ENCODE measurements at regions of chr19 and their contacts with region 1.

Region 1: GRCh38 chr19:43595999-43596841 is at the starts of genes IRGQ and ZNF576:
- DNase-seq: peak; percentile 100
- ATAC-seq: peak; percentile 88
- H3K4me3 Mint-ChIP-seq: peak within 1 kb of the TSS; percentile 99
- H3K27ac Mint-ChIP-seq: peak within 1 kb of the TSS; percentile 99
- H3K4me1 Mint-ChIP-seq: peaks cover 17% of the 10 kb centered on the region
- H3K27me3 Mint-ChIP-seq: no peaks in the 10 kb centered on the region
- CTCF ChIP-seq: no peak
- total RNA-seq, gene IRGQ: 33.6 to 38.1 TPM (median 35.5 TPM) in 3 replicates
- total RNA-seq, gene ZNF576: 15.9 to 18.5 TPM (median 16.5 TPM) in 3 replicates

Region 2: DNA sequence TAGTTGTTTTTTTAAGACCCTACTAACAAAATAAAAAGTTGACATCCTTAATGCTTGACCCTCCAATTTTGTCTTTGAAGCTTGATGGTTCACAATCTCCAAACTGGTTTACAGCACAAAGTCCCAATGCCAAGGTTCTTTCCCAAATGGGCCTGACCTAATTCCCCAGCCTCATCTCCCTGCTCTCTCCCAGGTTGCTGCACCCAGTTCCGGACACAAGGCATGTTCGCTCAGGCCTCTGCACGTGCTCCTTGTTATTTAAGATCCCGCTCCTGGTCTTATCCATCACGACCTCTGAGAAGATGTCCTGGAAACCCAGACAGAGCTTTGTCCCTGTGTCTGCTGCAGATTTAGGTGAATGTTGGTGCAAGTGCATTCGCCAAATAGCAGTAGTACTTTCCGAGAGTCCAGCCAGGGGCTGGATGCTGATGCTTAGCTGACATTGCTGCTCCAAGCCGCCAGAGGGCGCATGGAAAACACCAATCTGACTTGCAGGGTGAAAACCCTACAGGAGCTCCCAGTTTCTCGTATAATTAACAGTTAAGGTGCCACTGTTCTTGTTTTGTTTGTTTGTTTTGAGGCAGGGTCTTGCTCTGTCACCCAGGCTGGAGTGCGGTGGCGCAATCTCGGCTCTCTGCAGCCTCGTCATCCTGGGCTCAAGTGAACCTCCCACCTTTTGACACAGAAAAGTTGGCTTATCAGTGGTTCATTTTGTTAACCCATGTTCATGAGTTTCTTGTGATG is 149.3 kb before region 1 on chr19:
- CTCF ChIA-PET with region 1: interaction called, 24 read pairs
- POLR2A ChIA-PET with region 1: no interaction called
- DNase-seq: peak; percentile 84
- ATAC-seq: peak; percentile 92
- H3K4me3 Mint-ChIP-seq: peak overlapping the region; percentile 34; the same call in 1 of the 2 replicates
- H3K27ac Mint-ChIP-seq: 0 out of 2 replicates have a peak overlapping the region, but pooled peaks have one; percentile 5
- H3K4me1 Mint-ChIP-seq: peaks cover 10% of the 10 kb centered on the region
- H3K27me3 Mint-ChIP-seq: peaks cover 7% of the 10 kb centered on the region; the same call in 1 of the 2 replicates
- CTCF ChIP-seq: peak; percentile 91

Region 3: DNA sequence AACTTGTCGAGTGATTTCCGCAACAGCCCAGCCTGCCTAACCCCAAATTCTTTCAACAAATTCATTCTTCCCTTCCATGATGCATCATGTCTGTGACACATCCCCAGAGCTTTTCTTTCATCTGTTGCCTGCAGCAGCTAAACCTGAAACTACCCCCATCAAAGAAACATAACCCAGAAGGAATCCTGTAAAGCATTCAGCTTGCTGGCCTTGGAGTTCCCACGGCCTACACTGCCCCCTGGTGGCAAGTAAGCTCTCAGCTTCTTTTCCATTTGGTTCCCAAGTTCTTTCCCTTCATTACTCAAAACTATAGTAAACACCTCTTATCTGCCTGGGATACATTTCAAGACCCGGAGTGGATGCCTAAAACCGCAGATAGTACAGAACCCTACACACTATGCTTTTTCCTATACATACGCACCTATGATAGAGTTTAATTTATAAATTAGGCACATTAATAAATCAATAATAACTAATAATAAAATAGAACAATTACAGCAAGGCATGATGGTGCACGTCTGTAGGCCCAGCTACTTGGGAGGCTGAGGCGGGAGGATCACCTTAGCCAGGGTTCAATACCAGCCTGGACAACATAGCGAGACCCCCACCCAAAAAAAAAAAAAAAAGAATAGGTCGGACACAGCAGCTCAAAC is 76.7 kb before region 1 on chr19:
- CTCF ChIA-PET with region 1: interaction called, 20 read pairs
- POLR2A ChIA-PET with region 1: interaction called, 4 read pairs
- DNase-seq: peak; percentile 83
- ATAC-seq: no peak; the same call in 1 of the 2 replicates
- H3K4me3 Mint-ChIP-seq: no peak overlapping the region
- H3K27ac Mint-ChIP-seq: peak overlapping the region; percentile 32; the same call in 1 of the 2 replicates
- H3K4me1 Mint-ChIP-seq: peaks cover 3% of the 10 kb centered on the region
- H3K27me3 Mint-ChIP-seq: no peaks in the 10 kb centered on the region
- CTCF ChIP-seq: peak; percentile 92

Region 4: GRCh38 chr19:43541920-43542650 is 54.1 kb before region 1 on chr19:
- CTCF ChIA-PET with region 1: no interaction called
- POLR2A ChIA-PET with region 1: no interaction called
- DNase-seq: no peak
- ATAC-seq: no peak
- H3K4me3 Mint-ChIP-seq: no peak overlapping the region
- H3K27ac Mint-ChIP-seq: no peak overlapping the region
- H3K4me1 Mint-ChIP-seq: no peaks in the 10 kb centered on the region
- H3K27me3 Mint-ChIP-seq: no peaks in the 10 kb centered on the region
- CTCF ChIP-seq: no peak

Region 5: GRCh38 chr19:43570174-43570791 is 25.9 kb before region 1 on chr19:
- CTCF ChIA-PET with region 1: interaction called, 17 read pairs
- POLR2A ChIA-PET with region 1: interaction called, 5 read pairs
- DNase-seq: no peak
- ATAC-seq: peak; percentile 48
- H3K4me3 Mint-ChIP-seq: no peak overlapping the region
- H3K27ac Mint-ChIP-seq: peak overlapping the region; percentile 74
- H3K4me1 Mint-ChIP-seq: peaks cover 12% of the 10 kb centered on the region
- H3K27me3 Mint-ChIP-seq: no peaks in the 10 kb centered on the region
- CTCF ChIP-seq: no peak

Region 6: GRCh38 chr19:43584484-43584883 is 11.7 kb before region 1 on chr19:
- CTCF ChIA-PET with region 1: interaction called, 53 read pairs
- POLR2A ChIA-PET with region 1: interaction called, 3 read pairs
- DNase-seq: no peak
- ATAC-seq: no peak
- H3K4me3 Mint-ChIP-seq: no peak overlapping the region
- H3K27ac Mint-ChIP-seq: peak overlapping the region; percentile 66; the same call in 1 of the 2 replicates
- H3K4me1 Mint-ChIP-seq: peaks cover 20% of the 10 kb centered on the region
- H3K27me3 Mint-ChIP-seq: no peaks in the 10 kb centered on the region; the same call in 1 of the 2 replicates
- CTCF ChIP-seq: no peak

Region 7: DNA sequence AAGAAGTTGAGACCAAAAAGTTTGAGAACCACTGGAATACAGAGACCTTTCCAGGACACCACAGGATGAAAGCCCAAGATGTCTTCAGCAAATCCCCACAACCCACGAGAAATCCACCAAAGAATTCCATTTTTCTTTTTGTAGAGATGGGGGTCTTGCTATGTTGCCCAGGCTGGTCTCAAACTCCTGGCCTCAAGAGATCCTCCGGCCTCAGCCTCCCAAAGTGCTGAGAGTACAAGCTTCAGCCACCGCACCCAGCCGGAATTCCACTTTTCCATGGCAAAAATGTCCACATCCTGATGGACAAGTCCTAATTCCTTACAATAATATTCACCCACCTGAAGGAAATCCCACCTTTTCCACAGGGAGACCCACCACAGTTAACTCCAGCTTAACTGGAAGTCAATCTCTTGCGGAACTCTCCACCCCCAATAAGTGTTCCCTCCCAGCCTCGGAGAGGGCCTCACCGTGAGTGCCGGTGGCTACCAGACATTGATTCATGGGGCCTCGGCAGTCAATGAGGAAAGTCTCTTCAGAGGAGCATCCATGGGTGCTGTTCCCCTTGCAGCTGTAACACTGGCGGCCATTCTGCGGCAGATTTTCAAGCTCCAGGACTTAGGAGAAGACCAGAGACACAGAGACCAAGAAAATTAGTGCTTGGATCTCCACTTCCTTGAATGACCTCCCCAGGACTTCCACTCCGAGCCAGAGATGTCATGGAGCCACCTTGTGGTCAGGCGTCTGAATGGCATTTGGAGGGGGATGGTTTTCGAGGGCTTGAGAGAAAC is 55.7 kb after region 1 on chr19:
- CTCF ChIA-PET with region 1: interaction called, 22 read pairs
- POLR2A ChIA-PET with region 1: no interaction called
- DNase-seq: peak; percentile 74
- ATAC-seq: peak; percentile 88
- H3K4me3 Mint-ChIP-seq: no peak overlapping the region
- H3K27ac Mint-ChIP-seq: 0 out of 2 replicates have a peak overlapping the region, but pooled peaks have one; percentile 78
- H3K4me1 Mint-ChIP-seq: peaks cover 2% of the 10 kb centered on the region; the same call in 1 of the 2 replicates
- H3K27me3 Mint-ChIP-seq: peaks cover 2% of the 10 kb centered on the region; the same call in 1 of the 2 replicates
- CTCF ChIP-seq: peak; percentile 62

Region 8: GRCh38 chr19:43668406-43669158 is 72.4 kb after region 1 on chr19:
- CTCF ChIA-PET with region 1: interaction called, 28 read pairs
- POLR2A ChIA-PET with region 1: interaction called, 12 read pairs
- DNase-seq: peak; percentile 99
- ATAC-seq: peak; percentile 89
- H3K4me3 Mint-ChIP-seq: peak overlapping the region; percentile 89
- H3K27ac Mint-ChIP-seq: peak overlapping the region; percentile 91
- H3K4me1 Mint-ChIP-seq: peaks cover 31% of the 10 kb centered on the region
- H3K27me3 Mint-ChIP-seq: peaks cover 31% of the 10 kb centered on the region
- CTCF ChIP-seq: no peak

Region 9: DNA sequence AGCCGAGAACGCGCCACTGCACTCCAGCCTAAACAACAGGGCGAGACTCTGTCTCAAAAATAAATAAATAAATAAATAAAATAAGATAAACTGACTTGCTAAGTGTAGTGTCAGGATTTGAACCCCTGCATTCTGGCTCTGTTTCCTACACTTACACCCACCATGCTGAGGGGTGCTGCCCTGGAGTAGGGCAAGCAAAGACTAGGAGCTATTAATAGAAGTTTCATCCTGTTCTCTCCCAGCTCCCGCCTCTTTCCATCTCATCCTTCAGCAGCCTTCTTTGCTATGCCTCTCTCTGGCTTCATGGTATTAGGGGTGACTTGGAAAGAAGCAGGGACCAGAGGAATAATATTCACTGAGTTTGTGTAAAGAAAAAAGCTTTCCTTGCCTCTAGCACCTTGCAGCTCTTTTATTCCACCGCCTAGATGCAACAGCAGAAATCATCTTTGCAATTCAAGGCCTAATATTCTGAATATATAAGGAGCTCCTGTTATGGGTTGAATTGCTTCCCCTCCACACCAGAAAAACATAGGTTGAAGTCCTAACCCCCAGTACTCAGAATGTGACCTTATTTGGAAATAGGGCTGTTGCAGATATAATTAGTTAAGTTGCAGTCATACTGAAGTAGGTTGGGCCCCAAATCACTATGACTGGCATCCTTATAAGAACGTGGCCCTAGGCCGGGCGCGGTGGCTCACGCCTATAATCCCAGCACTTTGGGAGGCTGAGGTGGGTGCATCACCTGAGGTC is 82.5 kb after region 1 on chr19:
- CTCF ChIA-PET with region 1: no interaction called
- POLR2A ChIA-PET with region 1: no interaction called
- DNase-seq: no peak
- ATAC-seq: no peak
- H3K4me3 Mint-ChIP-seq: no peak overlapping the region
- H3K27ac Mint-ChIP-seq: no peak overlapping the region
- H3K4me1 Mint-ChIP-seq: peaks cover 8% of the 10 kb centered on the region
- H3K27me3 Mint-ChIP-seq: no peaks in the 10 kb centered on the region
- CTCF ChIP-seq: no peak